ENCODE measurements at regions of chr10 and their contacts with region 1.

Region 1: DNA sequence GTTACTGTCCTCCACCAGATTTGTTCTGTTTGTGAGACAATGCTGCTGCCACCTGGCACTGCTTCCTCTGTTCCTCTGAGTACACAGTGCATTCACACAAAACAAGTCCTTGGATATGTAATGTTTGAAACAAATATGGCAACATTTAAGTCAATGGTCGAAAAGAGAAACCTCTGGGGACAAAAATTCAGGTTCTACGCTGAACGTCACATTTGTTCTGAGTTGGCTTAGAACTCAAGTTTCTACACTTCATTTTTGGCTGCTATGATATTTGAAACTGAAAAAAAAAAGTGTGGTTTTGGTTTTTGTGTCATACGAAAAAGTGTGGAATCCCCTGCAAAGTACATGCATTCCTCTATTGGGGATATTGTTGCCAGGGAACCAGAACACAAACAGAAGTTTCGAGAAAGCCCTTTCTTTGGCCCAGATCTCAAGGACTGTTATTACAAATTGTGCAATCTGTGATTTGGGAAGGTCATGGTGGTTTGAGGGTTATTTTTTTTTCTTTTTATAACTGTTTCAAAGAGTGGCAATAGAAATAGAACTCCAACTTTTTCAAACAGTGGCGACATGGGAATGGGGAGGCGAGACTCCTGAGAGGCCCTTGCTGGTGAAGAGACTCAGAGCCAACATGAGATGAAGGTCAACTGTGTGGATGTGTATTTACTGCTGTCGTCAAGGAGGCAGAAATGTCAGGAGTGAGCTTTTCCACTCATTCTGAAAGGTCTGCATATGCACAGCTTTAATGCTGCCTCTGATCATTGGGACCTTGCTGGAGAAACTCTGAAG is 127.5 kb downstream of the CUBN start:
- DNase-seq: peak in 3 of 4 donors; percentile 62 to 92 (median 88)
- ATAC-seq: peak; percentile 70
- H3K4me3 ChIP-seq: no peak overlapping the region
- H3K27ac ChIP-seq: peak overlapping the region; percentile 80 to 83
- H3K4me1 ChIP-seq: peaks cover 16 to 36% of the 10 kb centered on the region in 2 donors
- H3K27me3 ChIP-seq: no peaks in the 10 kb centered on the region
- CTCF ChIP-seq: no peak

Region 2: GRCh38 chr10:16950656-16951601 is 51.2 kb before region 1 on chr10:
- intact Hi-C with region 1: no loop called
- DNase-seq: peak in 2 of 4 donors; percentile 44 to 72
- ATAC-seq: peak; percentile 13
- H3K4me3 ChIP-seq: no peak overlapping the region
- H3K27ac ChIP-seq: no peak overlapping the region
- H3K4me1 ChIP-seq: peaks cover 0 to 2% of the 10 kb centered on the region in 2 donors
- H3K27me3 ChIP-seq: no peaks in the 10 kb centered on the region
- CTCF ChIP-seq: no peak

Region 3: DNA sequence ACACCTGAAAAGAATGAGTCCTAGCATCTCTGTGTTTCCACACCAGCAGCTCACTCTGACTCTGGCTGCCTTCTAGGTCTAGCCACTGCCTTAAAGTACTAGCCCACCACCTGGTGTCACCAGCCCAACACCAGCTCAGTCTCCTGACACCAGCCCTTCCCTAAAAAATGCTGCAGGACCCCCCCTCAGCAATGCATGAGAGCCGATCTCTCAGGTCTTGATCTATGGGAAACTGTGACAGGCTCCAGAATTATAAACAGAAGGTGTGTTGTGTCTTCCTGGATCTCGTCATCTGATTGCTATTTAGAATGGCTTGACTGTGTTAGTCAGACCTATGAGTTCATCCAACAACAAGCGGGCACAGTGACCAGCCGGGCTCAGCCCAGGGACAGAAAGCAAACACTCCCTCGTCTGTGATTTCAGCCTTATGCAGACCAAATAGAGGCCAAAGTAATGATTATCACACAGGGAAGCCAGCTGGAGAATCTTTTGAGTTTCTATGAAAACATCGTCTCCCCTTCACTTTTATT is 60.9 kb after region 1 on chr10:
- intact Hi-C with region 1: no loop called
- DNase-seq: no peak
- ATAC-seq: peak; percentile 80
- H3K4me3 ChIP-seq: no peak overlapping the region
- H3K27ac ChIP-seq: peak overlapping the region; percentile 33 to 53
- H3K4me1 ChIP-seq: peaks cover 5 to 8% of the 10 kb centered on the region in 2 donors
- H3K27me3 ChIP-seq: no peaks in the 10 kb centered on the region
- CTCF ChIP-seq: no peak

Region 4: DNA sequence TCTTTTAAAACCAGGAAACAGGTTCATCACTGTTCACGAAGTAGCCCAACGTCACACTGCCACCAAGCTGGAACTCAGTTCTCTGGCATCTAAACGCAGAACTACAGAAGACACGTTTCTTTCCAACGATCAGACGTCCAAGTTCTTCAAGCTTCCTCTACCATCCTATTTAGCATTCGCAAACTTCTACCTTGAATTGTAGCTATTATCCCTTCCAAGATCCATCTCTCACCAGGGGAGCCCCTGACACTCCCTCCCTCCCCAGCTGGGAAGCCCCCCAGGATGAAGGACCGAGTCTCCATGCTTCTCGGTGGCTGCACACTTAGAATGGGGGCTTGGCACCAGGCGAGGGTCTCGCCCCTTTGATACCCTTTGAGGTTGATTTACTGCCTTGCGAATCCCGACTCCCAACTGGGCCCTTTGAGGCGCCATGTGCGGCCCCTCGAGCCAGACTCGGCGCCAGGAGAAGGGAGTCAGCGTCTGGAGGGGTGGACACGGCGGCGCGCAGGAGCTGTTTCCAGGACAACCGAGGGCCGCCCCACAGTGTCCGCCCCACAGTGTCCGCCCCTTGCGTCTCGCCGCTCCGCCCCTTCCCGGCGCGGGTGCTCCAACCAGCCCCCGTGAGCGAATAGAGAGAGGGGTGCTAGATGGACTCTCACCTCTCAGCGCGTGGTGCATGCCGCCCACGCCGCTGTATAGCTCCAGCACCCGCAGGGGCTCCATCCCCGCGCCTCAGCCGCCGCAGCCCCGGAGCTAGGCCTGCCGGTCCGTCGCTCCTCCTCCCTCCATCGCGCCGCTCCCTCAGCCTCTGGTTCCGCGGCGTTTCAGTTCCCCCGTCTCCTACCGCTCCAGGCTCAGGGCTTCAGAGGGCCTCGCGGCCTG is 199.0 kb after region 1 on chr10 and contains the start of gene TRDMT1:
- intact Hi-C with region 1: loop called in 1 of 2 experiments (anchors 10 kb)
- DNase-seq: peak; percentile 90 to 96 (median 94)
- ATAC-seq: peak; percentile 100
- H3K4me3 ChIP-seq: peak within 1 kb of the TSS; percentile 64 to 69
- H3K27ac ChIP-seq: peak within 1 kb of the TSS; percentile 96 to 98
- H3K4me1 ChIP-seq: peaks cover 10 to 22% of the 10 kb centered on the region in 2 donors
- H3K27me3 ChIP-seq: no peaks in the 10 kb centered on the region
- CTCF ChIP-seq: no peak
- polyA plus RNA-seq, gene TRDMT1: 10.2 to 18.4 (median 14.8) TPM

Measured in left lung (tissue), 14 donors.